ENCODE measurements at regions of chr2 and their contacts with region 1.

Region 1: GRCh38 chr2:42028571-42029148 is 19.2 kb upstream of the PKDCC start:
- DNase-seq: no peak
- H3K4me3 ChIP-seq: no peak overlapping the region
- H3K27ac ChIP-seq: no peak overlapping the region
- H3K4me1 ChIP-seq: no peaks in the 10 kb centered on the region
- H3K27me3 ChIP-seq: no peaks in the 10 kb centered on the region
- CTCF ChIP-seq: no peak
- EP300 ChIP-seq: no peak
- POLR2A ChIP-seq: no peak

Region 2: GRCh38 chr2:41981417-41981816 is 47.2 kb before region 1 on chr2:
- in situ Hi-C with region 1: no loop called
- intact Hi-C with region 1: loop called (anchors 5 kb)
- DNase-seq: no peak
- H3K4me3 ChIP-seq: no peak overlapping the region
- H3K27ac ChIP-seq: no peak overlapping the region
- H3K4me1 ChIP-seq: no peaks in the 10 kb centered on the region
- H3K27me3 ChIP-seq: no peaks in the 10 kb centered on the region
- CTCF ChIP-seq: no peak
- EP300 ChIP-seq: no peak
- POLR2A ChIP-seq: no peak

Region 3: GRCh38 chr2:42996528-42996927 is 967.9 kb after region 1 on chr2:
- in situ Hi-C with region 1: no loop called
- intact Hi-C with region 1: no loop called
- DNase-seq: no peak
- H3K4me3 ChIP-seq: no peak overlapping the region
- H3K27ac ChIP-seq: no peak overlapping the region
- H3K4me1 ChIP-seq: peaks cover 0 to 26% (median 23%) of the 10 kb centered on the region in 4 donors
- H3K27me3 ChIP-seq: no peaks in the 10 kb centered on the region
- CTCF ChIP-seq: no peak
- EP300 ChIP-seq: no peak
- POLR2A ChIP-seq: no peak

Measured in transverse colon (tissue), 4 donors.